CD8-positive, alpha-beta T cell (primary cell): ENCODE measurements at regions of chr18 and their contacts with region 1.

Region 1: GRCh38 chr18:79523736-79524180 is 128.0 kb downstream of the NFATC1 start:
- DNase-seq: peak; percentile 44 to 93 (median 73)
- ATAC-seq: peak; percentile 52
- H3K4me3 ChIP-seq: peak overlapping the region; percentile 44 to 52
- H3K4me3 Mint-ChIP-seq: peak overlapping the region; percentile 86
- H3K27ac ChIP-seq: peak overlapping the region; percentile 81
- H3K27ac Mint-ChIP-seq: peak overlapping the region; percentile 97
- H3K4me1 ChIP-seq: peaks cover 62% of the 10 kb centered on the region
- H3K4me1 Mint-ChIP-seq: peaks cover 58% of the 10 kb centered on the region
- H3K27me3 ChIP-seq: no peaks in the 10 kb centered on the region
- H3K27me3 Mint-ChIP-seq: no peaks in the 10 kb centered on the region
- CTCF ChIP-seq: no peak

Region 2: GRCh38 chr18:79393635-79394533 is 129.9 kb before region 1 on chr18:
- CTCF ChIA-PET with region 1: interaction called, 16 read pairs
- POLR2A ChIA-PET with region 1: interaction called, 7 read pairs
- intact Hi-C with region 1: loop called in 1 of 2 experiments (anchors 1 kb)
- DNase-seq: peak in 5 of 9 experiments; percentile 40 to 69 (median 59)
- ATAC-seq: peak; percentile 15
- H3K4me3 ChIP-seq: peak overlapping the region; percentile 45 to 59
- H3K4me3 Mint-ChIP-seq: peak overlapping the region; percentile 80
- H3K27ac ChIP-seq: peak overlapping the region in 1 of 2 experiments; percentile 24
- H3K27ac Mint-ChIP-seq: peak overlapping the region; percentile 46
- H3K4me1 ChIP-seq: peaks cover 25% of the 10 kb centered on the region
- H3K4me1 Mint-ChIP-seq: peaks cover 33% of the 10 kb centered on the region
- H3K27me3 ChIP-seq: peaks cover 0 to 14% of the 10 kb centered on the region in 2 experiments
- H3K27me3 Mint-ChIP-seq: peaks cover 4% of the 10 kb centered on the region
- CTCF ChIP-seq: no peak

Region 3: DNA sequence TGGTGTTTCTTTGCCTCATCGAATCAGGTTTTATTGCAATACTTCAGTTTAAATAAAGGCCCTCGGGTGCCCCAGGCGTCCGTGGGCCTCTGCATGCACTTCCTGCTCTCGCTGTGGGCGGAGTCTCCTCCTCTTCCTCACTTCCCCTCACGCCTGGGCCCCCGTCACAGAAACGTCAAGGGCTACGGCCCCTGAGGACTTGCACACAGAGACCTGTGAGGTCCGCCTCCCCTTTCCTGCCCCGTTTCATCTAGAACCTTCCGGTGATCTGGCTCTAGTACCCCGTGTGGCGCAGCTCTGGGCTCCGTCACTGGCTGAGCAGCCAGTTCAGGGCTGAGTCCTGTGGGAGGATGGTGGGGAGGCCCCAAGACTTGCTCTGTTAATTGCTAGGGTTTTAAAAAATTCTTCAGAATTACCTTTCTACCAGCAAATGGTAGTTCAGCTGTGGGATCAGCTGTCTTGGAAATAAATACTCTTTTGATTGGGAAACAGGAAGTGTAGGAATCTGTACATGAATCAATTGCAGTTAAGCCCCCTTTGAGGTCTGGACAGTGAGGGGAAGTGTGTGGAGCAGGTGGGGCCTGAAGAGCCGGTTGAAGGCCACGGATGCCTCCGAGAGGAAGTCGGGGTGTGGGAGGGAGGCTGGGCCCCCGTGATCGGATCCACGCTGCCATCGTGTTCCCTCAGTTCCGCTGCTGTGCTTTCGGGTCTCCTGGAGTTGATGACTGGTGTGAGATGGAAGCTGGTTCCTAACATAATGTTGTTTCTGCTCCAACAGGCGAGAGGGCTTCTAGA is 117.8 kb before region 1 on chr18:
- CTCF ChIA-PET with region 1: interaction called, 3 read pairs
- POLR2A ChIA-PET with region 1: interaction called, 20 read pairs
- intact Hi-C with region 1: loop called in 1 of 2 experiments (anchors 2 kb)
- DNase-seq: peak; percentile 78 to 96 (median 87)
- ATAC-seq: peak; percentile 85
- H3K4me3 ChIP-seq: peak overlapping the region; percentile 34 to 38
- H3K4me3 Mint-ChIP-seq: peak overlapping the region; percentile 72
- H3K27ac ChIP-seq: peak overlapping the region; percentile 86 to 94
- H3K27ac Mint-ChIP-seq: peak overlapping the region; percentile 94
- H3K4me1 ChIP-seq: peaks cover 59% of the 10 kb centered on the region
- H3K4me1 Mint-ChIP-seq: peaks cover 55% of the 10 kb centered on the region
- H3K27me3 ChIP-seq: no peaks in the 10 kb centered on the region
- H3K27me3 Mint-ChIP-seq: no peaks in the 10 kb centered on the region
- CTCF ChIP-seq: no peak

Region 4: GRCh38 chr18:79458131-79458838 is 65.5 kb before region 1 on chr18:
- CTCF ChIA-PET with region 1: no interaction called
- POLR2A ChIA-PET with region 1: no interaction called
- intact Hi-C with region 1: loop called (anchors 5 kb)
- DNase-seq: no peak
- ATAC-seq: no peak
- H3K4me3 ChIP-seq: no peak overlapping the region
- H3K4me3 Mint-ChIP-seq: no peak overlapping the region
- H3K27ac ChIP-seq: no peak overlapping the region
- H3K27ac Mint-ChIP-seq: no peak overlapping the region
- H3K4me1 ChIP-seq: no peaks in the 10 kb centered on the region
- H3K4me1 Mint-ChIP-seq: peaks cover 7% of the 10 kb centered on the region
- H3K27me3 ChIP-seq: no peaks in the 10 kb centered on the region
- H3K27me3 Mint-ChIP-seq: no peaks in the 10 kb centered on the region
- CTCF ChIP-seq: no peak

Region 5: DNA sequence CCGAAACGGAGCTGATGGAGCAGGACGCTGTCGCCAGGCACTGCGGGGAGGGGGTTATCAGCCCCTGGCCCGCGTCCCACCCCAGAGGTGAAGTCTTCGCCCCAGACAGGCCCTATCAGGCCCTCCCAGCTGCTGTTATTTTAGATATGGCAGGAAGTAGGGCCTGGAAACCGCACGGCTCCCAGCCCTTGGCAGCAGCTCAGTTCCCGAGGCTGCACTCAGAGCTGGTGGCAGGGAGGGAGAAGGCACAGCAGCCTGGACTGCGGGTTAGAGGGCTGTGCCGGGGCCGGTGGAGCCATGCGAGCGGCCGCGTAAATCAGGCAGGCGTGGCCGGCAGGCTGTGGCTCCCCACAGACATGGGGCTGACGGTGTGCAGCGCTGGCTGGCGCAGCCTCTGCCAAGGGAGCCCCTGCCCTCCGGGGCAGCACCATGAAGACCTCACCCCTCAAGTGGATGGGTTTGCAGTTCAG is 16.6 kb before region 1 on chr18:
- CTCF ChIA-PET with region 1: interaction called, 8 read pairs
- POLR2A ChIA-PET with region 1: interaction called, 23 read pairs
- intact Hi-C with region 1: loop called in 1 of 2 experiments (anchors 2 kb)
- DNase-seq: peak in 3 of 9 experiments; percentile 40 to 45 (median 42)
- ATAC-seq: peak; percentile 55
- H3K4me3 ChIP-seq: peak overlapping the region; percentile 31 to 36
- H3K4me3 Mint-ChIP-seq: peak overlapping the region; percentile 73
- H3K27ac ChIP-seq: peak overlapping the region; percentile 24 to 43
- H3K27ac Mint-ChIP-seq: peak overlapping the region; percentile 92
- H3K4me1 ChIP-seq: peaks cover 29% of the 10 kb centered on the region
- H3K4me1 Mint-ChIP-seq: peaks cover 52% of the 10 kb centered on the region
- H3K27me3 ChIP-seq: no peaks in the 10 kb centered on the region
- H3K27me3 Mint-ChIP-seq: no peaks in the 10 kb centered on the region
- CTCF ChIP-seq: no peak

Region 6: GRCh38 chr18:79599441-79599931 is 75.7 kb after region 1 on chr18:
- CTCF ChIA-PET with region 1: no interaction called
- POLR2A ChIA-PET with region 1: no interaction called
- intact Hi-C with region 1: no loop called
- DNase-seq: no peak
- ATAC-seq: no peak
- H3K4me3 ChIP-seq: no peak overlapping the region
- H3K4me3 Mint-ChIP-seq: no peak overlapping the region
- H3K27ac ChIP-seq: no peak overlapping the region
- H3K27ac Mint-ChIP-seq: no peak overlapping the region
- H3K4me1 ChIP-seq: no peaks in the 10 kb centered on the region
- H3K4me1 Mint-ChIP-seq: peaks cover 5% of the 10 kb centered on the region
- H3K27me3 ChIP-seq: no peaks in the 10 kb centered on the region
- H3K27me3 Mint-ChIP-seq: peaks cover 2% of the 10 kb centered on the region
- CTCF ChIP-seq: no peak